Activated naive CD4-positive, alpha-beta T cell treated with anti-CD3 and anti-CD28 coated beads for 36 hours (primary cell): ENCODE measurements at regions of chr12 and their contacts with region 1.

Region 1: GRCh38 chr12:110561471-110562201 is 21.5 kb downstream of the PPTC7 start:
- DNase-seq: no peak
- H3K4me3 Mint-ChIP-seq: peak overlapping the region; percentile 41
- H3K27ac Mint-ChIP-seq: peak overlapping the region; percentile 85
- H3K4me1 Mint-ChIP-seq: peaks cover 84% of the 10 kb centered on the region
- H3K27me3 Mint-ChIP-seq: no peaks in the 10 kb centered on the region

Region 2: DNA sequence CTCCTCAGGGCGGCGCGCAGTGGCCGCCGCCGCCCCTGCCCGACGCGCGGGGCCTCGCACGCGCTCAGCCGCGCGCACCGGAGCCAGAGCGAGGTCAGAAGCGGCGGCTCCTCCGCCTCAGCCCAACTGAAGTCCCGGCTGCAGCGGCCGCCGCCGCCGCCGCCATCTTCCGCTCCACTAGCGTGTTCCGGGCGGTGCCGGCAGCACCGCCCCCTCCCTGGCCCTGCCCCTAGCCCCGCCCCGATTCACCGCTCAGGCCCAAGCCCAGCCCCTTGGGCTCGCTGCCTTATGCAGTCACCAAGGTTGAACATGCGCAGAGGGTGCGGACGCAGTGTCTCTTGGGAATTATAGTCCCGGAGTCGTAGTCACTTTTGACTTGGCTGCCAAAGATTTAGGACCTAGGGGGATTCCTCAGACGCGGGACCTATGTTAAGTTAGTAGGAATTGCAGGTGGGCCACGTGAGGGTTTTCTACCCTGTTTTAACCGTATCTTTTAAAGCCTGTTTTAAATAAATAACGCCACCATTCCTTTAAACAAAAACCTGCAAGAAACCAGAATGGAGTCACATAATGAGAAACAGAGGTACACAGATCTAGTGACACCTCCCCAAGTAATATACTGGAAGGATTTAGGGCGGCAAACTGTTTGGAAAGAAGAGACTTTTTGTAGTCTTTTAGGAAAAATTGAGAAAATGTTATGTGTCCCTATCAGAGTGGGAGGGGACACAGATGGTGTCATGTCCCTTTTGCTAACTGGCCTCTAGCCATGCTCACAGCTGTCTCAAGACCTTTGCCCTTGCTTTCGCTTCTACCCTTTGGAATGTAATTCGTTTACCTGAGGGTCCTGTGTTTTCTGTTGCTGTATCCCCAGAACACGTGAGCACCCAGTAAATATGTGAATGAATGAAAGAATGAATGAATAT is 21.8 kb after region 1 on chr12 and contains the start of gene PPTC7:
- CTCF ChIA-PET with region 1: interaction called, 7 read pairs
- intact Hi-C with region 1: loop called (anchors 1 kb)
- DNase-seq: peak; percentile 99
- H3K4me3 Mint-ChIP-seq: peak within 1 kb of the TSS; percentile 90
- H3K27ac Mint-ChIP-seq: peak within 1 kb of the TSS; percentile 98
- H3K4me1 Mint-ChIP-seq: peaks cover 59% of the 10 kb centered on the region
- H3K27me3 Mint-ChIP-seq: no peaks in the 10 kb centered on the region
- total RNA-seq, gene PPTC7: 41.1 to 43.2 TPM

Region 3: GRCh38 chr12:111066744-111067437 is 505.3 kb after region 1 on chr12:
- CTCF ChIA-PET with region 1: no interaction called
- intact Hi-C with region 1: no loop called
- DNase-seq: no peak
- H3K4me3 Mint-ChIP-seq: no peak overlapping the region
- H3K27ac Mint-ChIP-seq: no peak overlapping the region
- H3K4me1 Mint-ChIP-seq: peaks cover 17% of the 10 kb centered on the region
- H3K27me3 Mint-ChIP-seq: no peaks in the 10 kb centered on the region